H1 (cell line): ENCODE measurements at regions of chr15 and their contacts with region 1.

Region 1: GRCh38 chr15:81274931-81275707 is 48.8 kb downstream of the STARD5 start:
- DNase-seq: peak; percentile 56 to 85
- H3K4me3 ChIP-seq: no peak overlapping the region
- H3K27ac ChIP-seq: no peak overlapping the region
- H3K4me1 ChIP-seq: no peaks in the 10 kb centered on the region
- H3K27me3 ChIP-seq: no peaks in the 10 kb centered on the region
- CTCF ChIP-seq: peak; percentile 84 to 98 (median 98)
- EP300 ChIP-seq: no peak
- POLR2A ChIP-seq: no peak
- RAD21 ChIP-seq: peak; percentile 96

Region 2: DNA sequence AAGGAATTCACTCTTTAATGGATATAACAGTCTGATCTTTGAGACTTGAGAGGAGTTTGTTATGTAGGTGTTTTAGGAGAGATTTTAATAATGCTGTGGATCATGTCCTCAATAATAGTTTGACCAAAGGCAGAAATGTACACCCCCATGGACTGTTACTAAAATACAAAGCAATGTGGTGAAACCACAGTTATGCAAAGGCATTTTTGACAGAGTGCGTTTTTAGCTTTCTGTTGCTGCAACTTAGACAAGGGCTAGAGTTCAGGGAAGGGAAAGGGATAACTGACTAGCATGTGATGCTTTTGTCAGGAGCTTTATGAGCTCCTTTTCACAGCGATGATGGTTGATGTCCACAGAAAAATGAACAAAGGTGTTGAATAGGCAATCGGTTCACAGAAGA is 52.4 kb after region 1 on chr15:
- CTCF ChIA-PET with region 1: interaction called, 13 read pairs
- POLR2A ChIA-PET with region 1: interaction called, 3 read pairs
- DNase-seq: no peak
- H3K4me3 ChIP-seq: no peak overlapping the region
- H3K27ac ChIP-seq: no peak overlapping the region
- H3K4me1 ChIP-seq: peaks cover 0 to 8% (median 2%) of the 10 kb centered on the region in 4 experiments; a peak in 5 of 7 replicates
- H3K27me3 ChIP-seq: 0 out of 7 replicates have a peak, but pooled peaks cover 0 to 3% (median 0%) of the 10 kb centered on the region in 4 experiments
- CTCF ChIP-seq: no peak
- EP300 ChIP-seq: no peak
- POLR2A ChIP-seq: no peak
- RAD21 ChIP-seq: no peak

Region 3: GRCh38 chr15:81388436-81388770 is 113.3 kb after region 1 on chr15:
- CTCF ChIA-PET with region 1: interaction called, 11 read pairs
- POLR2A ChIA-PET with region 1: no interaction called
- DNase-seq: no peak
- H3K4me3 ChIP-seq: no peak overlapping the region
- H3K27ac ChIP-seq: no peak overlapping the region
- H3K4me1 ChIP-seq: no peaks in the 10 kb centered on the region
- H3K27me3 ChIP-seq: no peaks in the 10 kb centered on the region
- CTCF ChIP-seq: no peak
- EP300 ChIP-seq: no peak
- POLR2A ChIP-seq: no peak
- RAD21 ChIP-seq: no peak

Region 4: DNA sequence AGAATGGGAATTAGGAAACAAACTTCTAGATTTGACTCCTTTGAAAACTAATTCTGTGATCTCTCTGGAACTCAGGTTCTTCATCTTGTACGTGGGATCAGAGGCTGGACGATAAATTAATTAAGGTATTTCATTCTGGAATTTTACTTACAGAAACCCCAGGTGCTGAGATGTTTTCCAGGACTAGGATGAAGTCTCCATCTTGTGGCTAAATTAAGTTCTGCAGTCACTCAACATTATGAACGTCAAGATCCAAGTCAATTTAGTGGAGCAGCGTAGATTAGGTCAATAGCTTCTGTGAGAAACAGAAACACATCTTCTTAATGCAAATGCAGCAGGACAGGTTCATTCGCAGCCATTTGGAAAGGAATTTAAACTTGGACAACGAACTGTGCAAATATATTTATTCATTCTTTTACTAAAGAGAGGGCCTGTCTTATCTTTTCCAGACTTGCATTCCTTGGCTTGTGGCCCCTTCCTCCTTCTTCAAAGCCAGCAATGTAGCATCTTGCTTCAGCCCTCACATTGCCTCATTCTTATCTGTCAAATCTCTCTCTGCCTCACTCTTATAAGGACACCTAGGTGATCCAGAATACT is 125.6 kb after region 1 on chr15:
- CTCF ChIA-PET with region 1: interaction called, 94 read pairs
- POLR2A ChIA-PET with region 1: interaction called, 3 read pairs
- DNase-seq: no peak
- H3K4me3 ChIP-seq: no peak overlapping the region
- H3K27ac ChIP-seq: no peak overlapping the region
- H3K4me1 ChIP-seq: no peaks in the 10 kb centered on the region
- H3K27me3 ChIP-seq: no peaks in the 10 kb centered on the region
- CTCF ChIP-seq: peak in 2 of 3 experiments; percentile 70 to 77; a peak in 3 of 4 replicates
- EP300 ChIP-seq: no peak
- POLR2A ChIP-seq: no peak
- RAD21 ChIP-seq: peak; percentile 88 to 92

Region 5: GRCh38 chr15:81685237-81685636 is 410.1 kb after region 1 on chr15:
- CTCF ChIA-PET with region 1: no interaction called
- POLR2A ChIA-PET with region 1: no interaction called
- DNase-seq: no peak
- H3K4me3 ChIP-seq: no peak overlapping the region
- H3K27ac ChIP-seq: no peak overlapping the region
- H3K4me1 ChIP-seq: no peaks in the 10 kb centered on the region
- H3K27me3 ChIP-seq: no peaks in the 10 kb centered on the region
- CTCF ChIP-seq: no peak
- EP300 ChIP-seq: no peak
- POLR2A ChIP-seq: no peak
- RAD21 ChIP-seq: no peak